GM12878 (cell line): ENCODE measurements at regions of chr1 and their contacts with region 1.

Region 1: DNA sequence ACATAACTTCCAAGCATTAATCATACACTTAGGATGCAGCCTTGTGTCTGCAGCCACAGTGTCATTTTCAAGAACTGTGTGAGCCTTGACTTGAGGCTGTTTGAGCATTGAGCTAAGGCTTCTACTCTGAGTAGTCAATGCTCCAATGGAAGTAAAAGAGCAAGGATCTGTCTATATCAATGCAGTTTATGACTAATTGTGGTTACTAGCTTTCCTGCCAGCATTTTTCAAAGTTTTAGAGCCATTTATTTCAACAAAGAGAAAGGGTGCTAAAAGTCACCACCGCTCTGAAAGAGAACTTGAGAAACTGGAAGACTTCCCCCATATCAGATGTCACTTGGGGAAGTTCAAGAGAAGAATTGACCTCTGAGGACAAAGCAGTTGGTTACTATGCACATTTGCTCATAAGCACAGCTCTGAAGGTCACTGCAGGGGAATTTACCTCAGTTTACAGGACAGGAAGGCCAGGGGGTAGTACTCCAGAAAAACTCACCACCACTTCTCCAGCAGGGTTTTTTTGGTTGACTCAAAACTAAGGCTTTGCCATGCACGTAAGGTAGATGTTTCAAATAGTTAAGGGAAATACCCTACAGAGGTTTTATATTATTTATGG is 24.5 kb upstream of the RGS1 start:
- DNase-seq: peak; percentile 89
- ATAC-seq: peak; percentile 56
- H3K4me3 ChIP-seq: no peak overlapping the region
- H3K27ac ChIP-seq: peak overlapping the region; percentile 88
- H3K4me1 ChIP-seq: peaks cover 48% of the 10 kb centered on the region
- H3K27me3 ChIP-seq: no peaks in the 10 kb centered on the region
- CTCF ChIP-seq: no peak
- EP300 ChIP-seq: peak; percentile 71 to 85; a peak in 2 of 4 replicates
- POLR2A ChIP-seq: 0 out of 2 replicates have a peak, but pooled peaks have one; percentile 13
- RAD21 ChIP-seq: no peak

Region 2: DNA sequence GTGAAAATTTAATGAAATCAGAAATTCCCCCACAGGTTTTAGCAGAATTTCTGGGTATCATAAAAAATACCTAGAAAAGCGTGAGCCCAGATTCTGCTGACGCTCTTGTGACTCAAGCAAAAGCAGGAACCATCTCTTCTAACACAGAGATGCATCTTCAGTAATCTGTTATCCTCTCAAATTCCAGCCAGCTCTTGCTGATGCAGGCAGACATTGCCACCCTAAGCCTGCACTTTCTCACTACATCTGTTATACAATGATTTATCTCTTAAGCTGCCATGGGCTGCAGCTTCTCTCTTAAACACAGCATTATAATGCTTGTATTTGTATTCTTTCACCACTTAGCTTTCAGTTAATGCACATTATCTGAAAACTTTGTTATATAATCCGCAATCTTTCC is 88.4 kb before region 1 on chr1:
- CTCF ChIA-PET with region 1: no interaction called
- POLR2A ChIA-PET with region 1: no interaction called
- RAD21 ChIA-PET with region 1: no interaction called
- SMC1A ChIA-PET with region 1: no interaction called
- in situ Hi-C with region 1: no loop called
- intact Hi-C with region 1: no loop called
- DNase-seq: no peak
- ATAC-seq: no peak
- H3K4me3 ChIP-seq: no peak overlapping the region
- H3K27ac ChIP-seq: no peak overlapping the region
- H3K4me1 ChIP-seq: no peaks in the 10 kb centered on the region
- H3K27me3 ChIP-seq: no peaks in the 10 kb centered on the region
- CTCF ChIP-seq: no peak
- EP300 ChIP-seq: no peak
- POLR2A ChIP-seq: no peak
- RAD21 ChIP-seq: no peak

Region 3: DNA sequence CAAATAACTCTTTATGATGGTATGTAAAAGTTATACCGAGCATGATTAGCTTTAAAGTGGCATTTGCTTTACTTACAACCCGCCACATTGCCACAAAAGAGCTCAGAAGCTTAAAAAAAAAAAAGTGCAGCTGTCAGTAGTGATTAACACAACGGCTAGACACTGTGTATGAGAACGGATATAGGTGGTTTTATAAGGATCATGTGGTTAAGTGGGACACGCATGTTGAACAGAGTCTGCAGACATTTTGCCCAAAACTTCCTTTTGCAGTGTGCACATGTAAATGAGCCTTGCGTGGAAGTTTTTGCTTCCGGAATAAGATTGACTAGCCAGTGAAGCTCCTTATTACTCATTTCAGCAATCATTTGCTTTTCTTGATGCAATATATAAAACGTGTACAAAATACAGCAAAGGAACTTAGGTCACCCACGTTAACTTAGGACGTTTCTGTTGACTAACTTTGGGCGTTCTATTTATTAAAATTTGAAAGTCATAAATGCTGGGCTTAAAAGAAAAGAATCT is 34.2 kb before region 1 on chr1:
- CTCF ChIA-PET with region 1: interaction called, 24 read pairs
- POLR2A ChIA-PET with region 1: interaction called, 170 read pairs
- RAD21 ChIA-PET with region 1: interaction called, 288 read pairs
- SMC1A ChIA-PET with region 1: interaction called, 268 read pairs
- in situ Hi-C with region 1: no loop called
- intact Hi-C with region 1: no loop called
- DNase-seq: peak; percentile 99
- ATAC-seq: peak; percentile 87
- H3K4me3 ChIP-seq: 0 out of 2 replicates have a peak overlapping the region, but pooled peaks have one; percentile 34
- H3K27ac ChIP-seq: peak overlapping the region; percentile 72
- H3K4me1 ChIP-seq: peaks cover 22% of the 10 kb centered on the region; the same call in 1 of the 2 replicates
- H3K27me3 ChIP-seq: no peaks in the 10 kb centered on the region
- CTCF ChIP-seq: no peak
- EP300 ChIP-seq: peak; percentile 99
- POLR2A ChIP-seq: no peak
- RAD21 ChIP-seq: peak; percentile 14; the same call in 1 of the 2 replicates

Region 4: GRCh38 chr1:192539297-192540092 is 11.5 kb before region 1 on chr1:
- CTCF ChIA-PET with region 1: interaction called, 14 read pairs
- POLR2A ChIA-PET with region 1: interaction called, 82 read pairs
- RAD21 ChIA-PET with region 1: interaction called, 91 read pairs
- SMC1A ChIA-PET with region 1: interaction called, 121 read pairs
- in situ Hi-C with region 1: no loop called
- intact Hi-C with region 1: no loop called
- DNase-seq: no peak
- ATAC-seq: peak; percentile 40
- H3K4me3 ChIP-seq: no peak overlapping the region
- H3K27ac ChIP-seq: peak overlapping the region; percentile 81
- H3K4me1 ChIP-seq: peaks cover 24% of the 10 kb centered on the region
- H3K27me3 ChIP-seq: no peaks in the 10 kb centered on the region
- CTCF ChIP-seq: no peak
- EP300 ChIP-seq: no peak
- POLR2A ChIP-seq: no peak
- RAD21 ChIP-seq: no peak

Region 5: GRCh38 chr1:192573499-192573898 is 22.5 kb after region 1 on chr1:
- CTCF ChIA-PET with region 1: interaction called, 11 read pairs
- POLR2A ChIA-PET with region 1: interaction called, 34 read pairs
- RAD21 ChIA-PET with region 1: interaction called, 47 read pairs
- SMC1A ChIA-PET with region 1: interaction called, 125 read pairs
- in situ Hi-C with region 1: no loop called
- intact Hi-C with region 1: loop called (anchors 1 kb)
- DNase-seq: no peak
- ATAC-seq: no peak
- H3K4me3 ChIP-seq: no peak overlapping the region
- H3K27ac ChIP-seq: no peak overlapping the region
- H3K4me1 ChIP-seq: peaks cover 3% of the 10 kb centered on the region; the same call in 1 of the 2 replicates
- H3K27me3 ChIP-seq: no peaks in the 10 kb centered on the region
- CTCF ChIP-seq: no peak
- EP300 ChIP-seq: no peak
- POLR2A ChIP-seq: no peak
- RAD21 ChIP-seq: no peak

Region 6: DNA sequence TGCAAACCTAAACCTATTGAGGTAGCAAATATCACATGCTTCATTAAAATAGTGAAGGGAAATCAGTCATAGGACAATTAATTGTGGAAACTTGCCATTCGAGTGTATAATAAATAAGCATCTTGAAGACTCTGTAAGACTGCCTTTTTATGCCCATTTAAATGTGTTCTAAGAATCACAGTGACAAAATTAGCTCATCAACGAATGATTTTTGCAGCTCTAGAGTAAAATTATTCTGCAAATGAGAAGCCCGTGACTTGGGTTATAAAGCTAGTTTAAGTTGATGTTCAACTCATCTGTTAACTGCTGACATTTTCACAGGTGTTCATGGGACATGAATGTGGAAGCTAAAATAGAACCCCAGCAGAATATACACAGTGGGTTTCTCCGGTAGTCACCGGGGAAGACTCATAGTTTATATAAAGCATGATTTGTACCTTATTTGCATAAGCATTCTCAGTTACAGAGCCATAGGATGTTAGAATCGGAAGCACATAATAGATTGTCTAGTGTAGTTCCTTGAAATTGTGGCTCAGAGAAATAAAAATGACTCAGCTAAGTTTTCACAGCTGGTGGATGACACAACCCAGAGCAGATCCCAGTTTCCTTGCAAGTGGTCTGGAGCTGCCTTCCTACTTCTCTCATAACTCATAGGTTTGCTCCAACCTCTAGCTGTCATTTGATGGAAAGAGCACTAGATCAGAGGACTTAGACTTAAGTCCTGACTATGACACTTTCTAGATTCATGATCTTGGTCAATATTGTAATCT is 400.8 kb after region 1 on chr1:
- CTCF ChIA-PET with region 1: no interaction called
- POLR2A ChIA-PET with region 1: no interaction called
- RAD21 ChIA-PET with region 1: no interaction called
- SMC1A ChIA-PET with region 1: no interaction called
- in situ Hi-C with region 1: no loop called
- intact Hi-C with region 1: no loop called
- DNase-seq: peak; percentile 12
- ATAC-seq: peak; percentile 92
- H3K4me3 ChIP-seq: no peak overlapping the region
- H3K27ac ChIP-seq: no peak overlapping the region
- H3K4me1 ChIP-seq: no peaks in the 10 kb centered on the region
- H3K27me3 ChIP-seq: no peaks in the 10 kb centered on the region
- CTCF ChIP-seq: no peak
- EP300 ChIP-seq: no peak
- POLR2A ChIP-seq: no peak
- RAD21 ChIP-seq: no peak

Region 7: GRCh38 chr1:193059268-193060225 is 508.5 kb after region 1 on chr1 and contains the starts of genes RO60 and UCHL5:
- CTCF ChIA-PET with region 1: no interaction called
- POLR2A ChIA-PET with region 1: interaction called, 3 read pairs
- RAD21 ChIA-PET with region 1: no interaction called
- SMC1A ChIA-PET with region 1: interaction called, 3 read pairs
- in situ Hi-C with region 1: no loop called
- intact Hi-C with region 1: loop called (anchors 10 kb)
- DNase-seq: peak; percentile 93
- ATAC-seq: peak; percentile 89
- H3K4me3 ChIP-seq: peak within 1 kb of the TSS; percentile 80
- H3K27ac ChIP-seq: peak within 1 kb of the TSS; percentile 95
- H3K4me1 ChIP-seq: peaks cover 28% of the 10 kb centered on the region
- H3K27me3 ChIP-seq: no peaks in the 10 kb centered on the region
- CTCF ChIP-seq: peak in 1 of 3 experiments; percentile 9; a peak in 1 of 6 replicates
- EP300 ChIP-seq: peak; percentile 38 to 60; a peak in 3 of 4 replicates
- POLR2A ChIP-seq: peak; percentile 95
- RAD21 ChIP-seq: no peak
- polyA plus RNA-seq, gene RO60: 25.4 to 103 TPM
- polyA plus RNA-seq, gene UCHL5: 36.5 to 45.6 TPM